ENCODE measurements at regions of chr10 and their contacts with region 1.

Region 1: DNA sequence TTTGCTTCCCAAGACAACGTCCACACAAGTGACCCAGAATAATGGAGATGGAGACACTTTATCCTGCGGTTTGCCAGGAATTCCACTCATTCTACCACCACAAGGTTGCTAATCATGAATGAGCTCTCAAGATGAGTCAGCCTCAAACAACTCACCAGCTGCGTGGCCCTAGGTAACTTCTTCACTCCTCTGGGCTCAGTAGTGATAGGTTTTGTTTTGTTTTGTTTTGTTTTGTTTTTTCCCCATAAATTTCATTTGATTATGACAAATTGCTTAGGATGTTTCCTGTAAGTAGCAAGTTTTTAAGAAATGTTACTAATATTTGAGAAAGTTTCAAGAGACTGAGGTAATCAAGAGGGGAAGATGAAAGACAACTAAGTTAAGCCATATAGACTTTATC is 286.8 kb downstream of the PARD3 start:
- DNase-seq: peak; percentile 83
- H3K4me3 ChIP-seq: no peak overlapping the region
- H3K27ac ChIP-seq: peak overlapping the region; percentile 89
- H3K4me1 ChIP-seq: peaks cover 30% of the 10 kb centered on the region
- H3K27me3 ChIP-seq: no peaks in the 10 kb centered on the region
- CTCF ChIP-seq: no peak
- POLR2A ChIP-seq: no peak

Region 2: DNA sequence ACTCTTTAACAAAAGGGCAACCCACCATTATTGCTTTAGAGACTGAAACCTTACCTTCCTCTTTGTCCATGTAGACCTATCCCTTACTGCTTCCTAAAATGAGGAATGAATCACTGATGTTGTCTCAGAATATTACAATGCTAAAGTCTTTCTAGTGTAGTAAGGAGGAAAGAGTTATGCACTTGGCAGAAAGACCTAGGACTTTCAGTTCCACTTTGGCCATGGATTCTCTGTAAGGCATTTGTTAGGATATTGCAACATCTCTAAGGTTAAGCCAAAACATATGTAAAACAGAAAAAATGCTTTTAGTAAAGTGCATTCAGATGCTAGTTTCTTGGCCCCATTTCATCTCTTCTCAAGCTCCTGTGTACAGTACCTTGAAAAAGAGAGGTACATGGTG is 55.8 kb after region 1 on chr10:
- CTCF ChIA-PET with region 1: interaction called, 9 read pairs
- POLR2A ChIA-PET with region 1: no interaction called
- dilution Hi-C with region 1: no loop called
- intact Hi-C with region 1: loop called (anchors 1 kb)
- DNase-seq: peak; percentile 31
- H3K4me3 ChIP-seq: no peak overlapping the region
- H3K27ac ChIP-seq: no peak overlapping the region
- H3K4me1 ChIP-seq: peaks cover 32% of the 10 kb centered on the region
- H3K27me3 ChIP-seq: no peaks in the 10 kb centered on the region
- CTCF ChIP-seq: no peak
- POLR2A ChIP-seq: no peak

Measured in endothelial cell of umbilical vein (primary cell).